ENCODE measurements at regions of chr3 and their contacts with region 1.

Region 1: DNA sequence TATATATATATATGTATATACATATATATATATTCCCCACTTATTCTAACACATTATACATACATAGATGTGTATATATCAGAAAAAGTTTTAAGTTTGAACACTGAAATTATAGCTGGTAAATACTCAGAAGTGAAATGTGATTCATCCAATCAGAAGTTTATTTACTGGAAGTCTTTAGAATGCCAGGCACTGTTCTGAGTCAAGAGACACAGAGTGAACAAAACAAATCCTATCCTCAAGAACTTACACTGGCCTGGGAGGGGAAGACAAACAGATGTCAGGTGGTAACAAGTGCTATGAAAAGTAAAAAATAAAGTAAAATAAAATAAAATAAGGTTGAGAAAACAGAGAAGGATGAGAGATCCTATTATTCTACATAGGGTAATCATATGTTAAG is 13.4 kb downstream of the DHX36 start:
- DNase-seq: no peak
- ATAC-seq: no peak
- H3K4me3 ChIP-seq: no peak overlapping the region
- H3K4me3 Mint-ChIP-seq: no peak overlapping the region
- H3K27ac ChIP-seq: no peak overlapping the region
- H3K27ac Mint-ChIP-seq: no peak overlapping the region
- H3K4me1 ChIP-seq: no peaks in the 10 kb centered on the region
- H3K4me1 Mint-ChIP-seq: peaks cover 29% of the 10 kb centered on the region
- H3K27me3 ChIP-seq: no peaks in the 10 kb centered on the region
- H3K27me3 Mint-ChIP-seq: no peaks in the 10 kb centered on the region
- CTCF ChIP-seq: no peak

Region 2: GRCh38 chr3:154274348-154274747 is 36.5 kb before region 1 on chr3:
- CTCF ChIA-PET with region 1: no interaction called
- POLR2A ChIA-PET with region 1: no interaction called
- intact Hi-C with region 1: loop called in 1 of 2 experiments (anchors 5 kb)
- DNase-seq: no peak
- ATAC-seq: no peak
- H3K4me3 ChIP-seq: no peak overlapping the region
- H3K4me3 Mint-ChIP-seq: no peak overlapping the region
- H3K27ac ChIP-seq: no peak overlapping the region
- H3K27ac Mint-ChIP-seq: peak overlapping the region; percentile 74
- H3K4me1 ChIP-seq: no peaks in the 10 kb centered on the region
- H3K4me1 Mint-ChIP-seq: peaks cover 4% of the 10 kb centered on the region
- H3K27me3 ChIP-seq: no peaks in the 10 kb centered on the region
- H3K27me3 Mint-ChIP-seq: no peaks in the 10 kb centered on the region
- CTCF ChIP-seq: no peak